ENCODE measurements at regions of chr10 and their contacts with region 1.

Region 1: GRCh38 chr10:14959276-14960057 is at the start of gene MEIG1:
- DNase-seq: peak; percentile 83 to 96 (median 88)
- ATAC-seq: peak; percentile 85
- H3K4me3 ChIP-seq: peak within 1 kb of the TSS; percentile 83
- H3K4me3 Mint-ChIP-seq: peak within 1 kb of the TSS; percentile 98
- H3K27ac ChIP-seq: peak within 1 kb of the TSS; percentile 86 to 92
- H3K27ac Mint-ChIP-seq: peak within 1 kb of the TSS; percentile 98
- H3K4me1 ChIP-seq: peaks cover 30% of the 10 kb centered on the region
- H3K4me1 Mint-ChIP-seq: peaks cover 34% of the 10 kb centered on the region
- H3K27me3 ChIP-seq: no peaks in the 10 kb centered on the region
- H3K27me3 Mint-ChIP-seq: no peaks in the 10 kb centered on the region
- CTCF ChIP-seq: no peak
- total RNA-seq, gene MEIG1: not detected

Region 2: GRCh38 chr10:14276210-14276609 is 683.3 kb before region 1 on chr10:
- CTCF ChIA-PET with region 1: no interaction called
- POLR2A ChIA-PET with region 1: no interaction called
- intact Hi-C with region 1: no loop called
- DNase-seq: no peak
- ATAC-seq: no peak
- H3K4me3 ChIP-seq: no peak overlapping the region
- H3K4me3 Mint-ChIP-seq: no peak overlapping the region
- H3K27ac ChIP-seq: no peak overlapping the region
- H3K27ac Mint-ChIP-seq: no peak overlapping the region
- H3K4me1 ChIP-seq: no peaks in the 10 kb centered on the region
- H3K4me1 Mint-ChIP-seq: no peaks in the 10 kb centered on the region
- H3K27me3 ChIP-seq: peaks cover 0 to 3% of the 10 kb centered on the region in 2 experiments
- H3K27me3 Mint-ChIP-seq: peaks cover 11% of the 10 kb centered on the region
- CTCF ChIP-seq: no peak

Region 3: DNA sequence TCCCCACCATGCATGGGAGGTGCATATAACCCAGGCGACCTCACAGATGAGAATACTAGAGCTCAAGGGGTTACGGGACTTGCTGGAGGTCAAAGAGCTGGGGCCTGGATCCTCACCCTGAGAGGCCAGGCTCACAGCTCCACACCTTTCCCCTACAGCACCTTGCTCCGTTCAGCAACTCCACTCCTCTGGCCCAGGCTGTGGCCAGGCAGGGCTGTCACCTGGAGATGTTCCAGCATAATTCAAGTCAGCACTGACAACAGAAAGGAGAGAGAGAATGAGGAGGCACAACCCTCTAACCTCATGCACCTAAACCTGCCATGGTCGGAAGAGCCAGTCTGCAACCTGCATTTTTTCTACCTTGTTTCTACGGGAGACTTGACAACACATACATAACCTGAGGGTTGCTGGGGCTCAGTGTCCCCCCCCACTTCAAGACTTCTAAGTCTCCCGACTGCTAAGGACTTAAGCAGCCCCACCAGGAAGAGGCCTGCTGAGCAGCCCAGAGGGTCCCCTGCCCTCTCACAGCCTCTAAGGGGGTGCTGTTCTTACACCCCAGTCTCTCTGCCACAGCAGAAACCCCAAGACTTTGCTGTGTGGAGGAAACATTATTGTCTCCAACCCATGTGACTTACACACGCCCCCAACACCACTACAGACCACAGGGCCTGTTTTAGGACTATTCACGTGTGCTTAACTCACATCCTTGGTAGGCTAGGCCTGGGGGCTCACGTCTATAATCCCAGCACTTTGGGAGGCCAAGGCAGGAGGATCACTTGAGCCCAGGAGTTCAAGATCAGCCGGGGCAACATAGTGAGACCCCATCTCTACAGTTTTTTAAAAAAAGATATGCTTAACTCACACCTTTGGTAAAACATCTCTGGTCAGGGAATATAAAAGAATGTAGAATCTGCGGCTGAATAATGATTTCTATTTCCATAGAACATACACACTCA is 360.4 kb before region 1 on chr10:
- CTCF ChIA-PET with region 1: no interaction called
- POLR2A ChIA-PET with region 1: no interaction called
- intact Hi-C with region 1: no loop called
- DNase-seq: peak in 1 of 14 experiments; percentile 31
- ATAC-seq: peak; percentile 4
- H3K4me3 ChIP-seq: no peak overlapping the region
- H3K4me3 Mint-ChIP-seq: peak overlapping the region; percentile 3
- H3K27ac ChIP-seq: peak overlapping the region in 1 of 2 donors; percentile 48
- H3K27ac Mint-ChIP-seq: peak overlapping the region; percentile 54
- H3K4me1 ChIP-seq: peaks cover 70% of the 10 kb centered on the region
- H3K4me1 Mint-ChIP-seq: peaks cover 90% of the 10 kb centered on the region
- H3K27me3 ChIP-seq: no peaks in the 10 kb centered on the region
- H3K27me3 Mint-ChIP-seq: no peaks in the 10 kb centered on the region
- CTCF ChIP-seq: no peak

Region 4: GRCh38 chr10:15097011-15097812 is 137.7 kb after region 1 on chr10 and contains the start of gene RPP38:
- CTCF ChIA-PET with region 1: no interaction called
- POLR2A ChIA-PET with region 1: interaction called, 9 read pairs
- intact Hi-C with region 1: loop called in 1 of 2 experiments (anchors 5 kb)
- DNase-seq: peak; percentile 89 to 97 (median 92)
- ATAC-seq: peak; percentile 80
- H3K4me3 ChIP-seq: peak within 1 kb of the TSS; percentile 80
- H3K4me3 Mint-ChIP-seq: peak within 1 kb of the TSS; percentile 95
- H3K27ac ChIP-seq: peak within 1 kb of the TSS; percentile 89 to 95
- H3K27ac Mint-ChIP-seq: peak within 1 kb of the TSS; percentile 97
- H3K4me1 ChIP-seq: peaks cover 43% of the 10 kb centered on the region
- H3K4me1 Mint-ChIP-seq: peaks cover 38% of the 10 kb centered on the region
- H3K27me3 ChIP-seq: no peaks in the 10 kb centered on the region
- H3K27me3 Mint-ChIP-seq: no peaks in the 10 kb centered on the region
- CTCF ChIP-seq: no peak
- total RNA-seq, gene RPP38: 12.9 to 14.9 TPM

Region 5: DNA sequence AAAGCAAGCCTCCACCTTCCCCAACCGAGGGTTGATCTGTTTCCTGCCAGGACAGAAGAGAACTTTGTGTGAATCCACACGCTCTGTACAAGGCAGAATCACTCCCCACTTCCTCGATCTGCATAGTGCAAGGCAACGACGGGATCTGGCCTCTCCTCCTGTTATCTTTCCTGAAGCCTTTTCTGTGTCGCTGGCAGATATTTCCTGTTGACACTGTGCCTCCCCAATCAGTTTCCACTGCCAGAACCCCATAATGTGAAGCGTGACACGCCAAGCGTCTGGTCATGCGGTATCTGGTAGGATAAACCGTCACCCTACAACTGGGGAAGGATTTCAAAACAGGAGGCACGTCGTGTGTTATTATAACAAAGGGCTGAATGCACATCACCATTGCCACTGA is 354.4 kb after region 1 on chr10:
- CTCF ChIA-PET with region 1: no interaction called
- POLR2A ChIA-PET with region 1: no interaction called
- intact Hi-C with region 1: no loop called
- DNase-seq: no peak
- ATAC-seq: no peak
- H3K4me3 ChIP-seq: no peak overlapping the region
- H3K4me3 Mint-ChIP-seq: no peak overlapping the region
- H3K27ac ChIP-seq: no peak overlapping the region
- H3K27ac Mint-ChIP-seq: no peak overlapping the region
- H3K4me1 ChIP-seq: no peaks in the 10 kb centered on the region
- H3K4me1 Mint-ChIP-seq: peaks cover 7% of the 10 kb centered on the region
- H3K27me3 ChIP-seq: no peaks in the 10 kb centered on the region
- H3K27me3 Mint-ChIP-seq: no peaks in the 10 kb centered on the region
- CTCF ChIP-seq: no peak